Activated CD8-positive, alpha-beta T cell treated with anti-CD3 and anti-CD28 coated beads for 36 hours (primary cell): ENCODE measurements at regions of chr17 and their contacts with region 1.

Region 1: GRCh38 chr17:42405963-42406495 is 17.0 kb downstream of the CAVIN1 start:
- DNase-seq: peak; percentile 89
- ATAC-seq: peak; percentile 77
- H3K4me3 Mint-ChIP-seq: no peak overlapping the region
- H3K27ac Mint-ChIP-seq: no peak overlapping the region
- H3K4me1 Mint-ChIP-seq: peaks cover 24% of the 10 kb centered on the region
- H3K27me3 Mint-ChIP-seq: no peaks in the 10 kb centered on the region
- CTCF ChIP-seq: peak; percentile 94

Region 2: GRCh38 chr17:42322382-42323267 is 83.4 kb before region 1 on chr17:
- CTCF ChIA-PET with region 1: interaction called, 968 read pairs
- POLR2A ChIA-PET with region 1: interaction called, 13 read pairs
- intact Hi-C with region 1: loop called (anchors 2 kb)
- DNase-seq: peak; percentile 99
- ATAC-seq: peak; percentile 89
- H3K4me3 Mint-ChIP-seq: no peak overlapping the region
- H3K27ac Mint-ChIP-seq: peak overlapping the region; percentile 85
- H3K4me1 Mint-ChIP-seq: peaks cover 52% of the 10 kb centered on the region
- H3K27me3 Mint-ChIP-seq: no peaks in the 10 kb centered on the region
- CTCF ChIP-seq: peak; percentile 100

Region 3: GRCh38 chr17:42361781-42362186 is 44.2 kb before region 1 on chr17:
- CTCF ChIA-PET with region 1: interaction called, 13 read pairs
- POLR2A ChIA-PET with region 1: interaction called, 3 read pairs
- intact Hi-C with region 1: no loop called
- DNase-seq: peak; percentile 82
- ATAC-seq: peak; percentile 96
- H3K4me3 Mint-ChIP-seq: peak overlapping the region; percentile 56
- H3K27ac Mint-ChIP-seq: peak overlapping the region; percentile 81
- H3K4me1 Mint-ChIP-seq: peaks cover 70% of the 10 kb centered on the region
- H3K27me3 Mint-ChIP-seq: no peaks in the 10 kb centered on the region
- CTCF ChIP-seq: no peak

Region 4: DNA sequence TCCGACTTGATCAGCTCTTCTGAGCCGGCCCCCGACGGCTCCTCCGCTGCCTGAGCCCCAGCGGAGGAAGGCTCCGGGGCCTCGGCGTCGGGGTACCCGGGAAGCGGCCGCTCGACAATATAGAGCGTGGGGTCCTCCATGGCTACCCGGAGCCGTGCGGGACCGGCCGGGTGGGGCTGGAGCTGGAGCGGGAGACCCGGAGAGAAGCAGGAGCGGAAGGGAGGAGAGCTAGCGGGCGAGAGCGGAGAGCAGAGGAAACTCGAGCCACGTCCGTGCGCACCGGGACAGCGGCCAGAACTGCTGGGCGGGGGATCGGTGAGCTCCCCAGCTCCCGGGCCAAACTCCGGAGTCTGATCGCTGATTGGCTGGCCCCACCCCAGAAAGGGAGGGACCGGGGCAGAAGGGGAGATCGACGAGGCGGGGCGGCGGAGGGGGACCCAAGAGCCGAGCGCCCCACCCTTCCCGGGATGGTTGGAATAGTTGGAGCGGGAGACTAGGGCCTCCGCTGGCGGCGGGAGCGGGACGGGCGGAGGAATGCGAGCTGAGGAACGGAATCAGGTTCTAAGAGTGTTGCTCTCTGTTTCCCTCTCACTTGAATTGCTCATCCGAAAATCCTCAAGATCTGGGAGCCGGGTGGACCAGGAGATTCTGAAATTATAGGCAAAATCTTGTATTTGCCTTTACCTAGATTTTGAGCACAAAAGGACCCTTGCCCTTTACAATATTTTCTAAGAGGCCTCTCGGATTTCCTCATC is 17.1 kb after region 1 on chr17 and contains the start of gene CAVIN1:
- CTCF ChIA-PET with region 1: interaction called, 11 read pairs
- POLR2A ChIA-PET with region 1: interaction called, 5 read pairs
- intact Hi-C with region 1: no loop called
- DNase-seq: peak; percentile 34
- ATAC-seq: peak; percentile 26
- H3K4me3 Mint-ChIP-seq: peak within 1 kb of the TSS; percentile 70
- H3K27ac Mint-ChIP-seq: no peak within 1 kb of the TSS
- H3K4me1 Mint-ChIP-seq: peaks cover 19% of the 10 kb centered on the region
- H3K27me3 Mint-ChIP-seq: peaks cover 35% of the 10 kb centered on the region
- CTCF ChIP-seq: no peak
- total RNA-seq, gene CAVIN1: 1.8 to 2.0 TPM

Region 5: DNA sequence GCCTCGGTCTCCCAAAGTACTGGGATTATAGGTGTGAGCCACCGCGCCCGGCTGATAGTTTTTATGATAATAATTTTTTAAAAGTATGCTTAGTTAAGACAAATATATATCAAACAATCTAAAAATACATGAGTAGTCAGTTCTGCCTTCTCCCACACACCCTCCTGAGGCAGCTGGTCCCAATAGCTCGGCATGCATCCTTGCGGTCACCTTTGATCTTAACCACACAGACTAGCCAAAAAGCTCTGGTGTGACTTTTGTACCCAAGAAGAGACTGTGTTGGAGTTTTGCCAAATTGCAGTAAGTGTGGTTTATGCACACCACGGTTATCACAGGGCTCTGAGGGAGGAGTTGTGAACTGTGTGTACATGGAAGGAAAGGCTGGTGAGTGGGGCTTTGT is 78.3 kb after region 1 on chr17:
- CTCF ChIA-PET with region 1: no interaction called
- POLR2A ChIA-PET with region 1: no interaction called
- intact Hi-C with region 1: no loop called
- DNase-seq: peak; percentile 94
- ATAC-seq: peak; percentile 95
- H3K4me3 Mint-ChIP-seq: peak overlapping the region; percentile 30
- H3K27ac Mint-ChIP-seq: peak overlapping the region; percentile 49
- H3K4me1 Mint-ChIP-seq: peaks cover 30% of the 10 kb centered on the region
- H3K27me3 Mint-ChIP-seq: no peaks in the 10 kb centered on the region
- CTCF ChIP-seq: no peak

Region 6: DNA sequence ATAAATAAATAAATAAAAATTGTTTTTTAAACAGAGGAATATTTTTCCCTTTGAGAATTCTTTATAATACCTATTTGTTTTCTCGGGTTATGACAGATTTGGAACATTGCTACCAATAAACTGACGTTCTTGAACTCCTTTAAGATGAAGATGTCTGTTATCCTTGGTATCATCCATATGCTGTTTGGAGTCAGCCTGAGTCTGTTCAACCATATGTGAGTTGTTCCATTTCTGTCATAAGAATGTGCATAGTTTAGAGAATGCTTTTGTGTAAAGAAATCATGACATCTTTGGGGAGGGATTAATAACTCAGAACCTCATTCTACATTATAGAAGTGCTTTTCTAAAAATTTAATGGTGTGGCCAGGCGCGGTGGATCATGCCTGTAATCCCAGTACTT is 92.8 kb after region 1 on chr17:
- CTCF ChIA-PET with region 1: no interaction called
- POLR2A ChIA-PET with region 1: no interaction called
- intact Hi-C with region 1: no loop called
- DNase-seq: no peak
- ATAC-seq: no peak
- H3K4me3 Mint-ChIP-seq: no peak overlapping the region
- H3K27ac Mint-ChIP-seq: no peak overlapping the region
- H3K4me1 Mint-ChIP-seq: peaks cover 5% of the 10 kb centered on the region
- H3K27me3 Mint-ChIP-seq: no peaks in the 10 kb centered on the region
- CTCF ChIP-seq: no peak